Mammary epithelial cell (primary cell): ENCODE measurements at regions of chr3 and their contacts with region 1.

Region 1: GRCh38 chr3:180036671-180037455 is at the start of gene PEX5L:
- DNase-seq: peak; percentile 62
- H3K4me3 ChIP-seq: peak within 1 kb of the TSS; percentile 38 to 72 (median 61)
- H3K27ac ChIP-seq: no peak within 1 kb of the TSS
- H3K4me1 ChIP-seq: peaks cover 15% of the 10 kb centered on the region
- H3K27me3 ChIP-seq: no peaks in the 10 kb centered on the region
- CTCF ChIP-seq: peak in 1 of 2 donors; percentile 19
- total RNA-seq, gene PEX5L: 0.83 to 7.1 TPM

Region 2: GRCh38 chr3:179837374-179837773 is 199.5 kb before region 1 on chr3:
- CTCF ChIA-PET with region 1: no interaction called
- dilution Hi-C with region 1: no loop called
- in situ Hi-C with region 1: no loop called
- intact Hi-C with region 1: no loop called
- DNase-seq: peak; percentile 6
- H3K4me3 ChIP-seq: no peak overlapping the region
- H3K27ac ChIP-seq: no peak overlapping the region
- H3K4me1 ChIP-seq: peaks cover 7% of the 10 kb centered on the region
- H3K27me3 ChIP-seq: no peaks in the 10 kb centered on the region
- CTCF ChIP-seq: no peak

Region 3: DNA sequence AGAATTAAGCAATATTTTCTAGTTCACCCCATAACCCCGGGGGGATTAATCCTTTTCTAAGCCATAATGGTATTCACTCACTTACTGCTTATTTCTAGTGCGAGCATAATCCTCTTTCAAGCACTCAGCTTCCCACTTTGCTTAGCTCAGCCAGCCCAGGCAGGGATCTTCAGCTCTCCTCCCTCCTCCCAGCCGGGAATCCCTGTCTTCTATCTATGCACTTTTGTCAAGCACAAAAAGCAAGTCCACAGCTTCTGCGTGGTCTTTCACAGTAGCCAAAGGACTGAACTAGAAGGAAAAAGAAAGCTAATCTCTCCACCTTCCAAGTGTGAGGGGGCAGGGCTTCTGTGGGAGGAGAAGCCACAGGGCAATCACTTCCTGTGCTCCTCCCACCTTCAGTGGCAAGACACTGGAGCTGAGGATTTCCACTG is 62.9 kb before region 1 on chr3:
- CTCF ChIA-PET with region 1: no interaction called
- dilution Hi-C with region 1: no loop called
- in situ Hi-C with region 1: no loop called
- intact Hi-C with region 1: no loop called
- DNase-seq: no peak
- H3K4me3 ChIP-seq: no peak overlapping the region
- H3K27ac ChIP-seq: no peak overlapping the region
- H3K4me1 ChIP-seq: peaks cover 7% of the 10 kb centered on the region
- H3K27me3 ChIP-seq: no peaks in the 10 kb centered on the region
- CTCF ChIP-seq: no peak

Region 4: GRCh38 chr3:180408654-180409053 is 371.8 kb after region 1 on chr3:
- CTCF ChIA-PET with region 1: no interaction called
- dilution Hi-C with region 1: no loop called
- in situ Hi-C with region 1: no loop called
- intact Hi-C with region 1: loop called (anchors 2 kb)
- DNase-seq: peak; percentile 87
- H3K4me3 ChIP-seq: no peak overlapping the region
- H3K27ac ChIP-seq: peak overlapping the region; percentile 59
- H3K4me1 ChIP-seq: peaks cover 38% of the 10 kb centered on the region
- H3K27me3 ChIP-seq: no peaks in the 10 kb centered on the region
- CTCF ChIP-seq: no peak

Region 5: DNA sequence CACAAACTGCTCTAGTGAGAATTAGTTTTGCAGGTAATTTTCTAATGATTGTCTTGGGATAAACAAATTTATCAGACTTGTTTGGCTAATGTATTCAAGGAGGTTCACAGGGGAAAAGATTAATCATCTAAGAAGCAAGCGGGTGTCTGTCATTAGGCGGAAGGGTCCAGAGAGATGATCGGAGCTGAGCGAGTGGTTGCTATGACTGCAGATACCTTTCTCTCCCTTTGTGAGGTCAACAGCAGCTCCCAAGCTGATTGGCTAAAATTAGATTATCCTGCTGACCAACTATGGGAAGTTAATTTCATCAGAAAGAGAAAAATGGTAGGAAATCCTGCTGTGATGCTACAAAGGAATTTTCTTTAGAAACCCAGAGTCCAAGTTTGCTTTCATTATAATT is 1950.9 kb after region 1 on chr3:
- CTCF ChIA-PET with region 1: no interaction called
- dilution Hi-C with region 1: no loop called
- in situ Hi-C with region 1: no loop called
- intact Hi-C with region 1: no loop called
- DNase-seq: no peak
- H3K4me3 ChIP-seq: no peak overlapping the region
- H3K27ac ChIP-seq: no peak overlapping the region
- H3K4me1 ChIP-seq: no peaks in the 10 kb centered on the region
- H3K27me3 ChIP-seq: no peaks in the 10 kb centered on the region
- CTCF ChIP-seq: no peak